ENCODE measurements at regions of chr16 and their contacts with region 1.

Region 1: DNA sequence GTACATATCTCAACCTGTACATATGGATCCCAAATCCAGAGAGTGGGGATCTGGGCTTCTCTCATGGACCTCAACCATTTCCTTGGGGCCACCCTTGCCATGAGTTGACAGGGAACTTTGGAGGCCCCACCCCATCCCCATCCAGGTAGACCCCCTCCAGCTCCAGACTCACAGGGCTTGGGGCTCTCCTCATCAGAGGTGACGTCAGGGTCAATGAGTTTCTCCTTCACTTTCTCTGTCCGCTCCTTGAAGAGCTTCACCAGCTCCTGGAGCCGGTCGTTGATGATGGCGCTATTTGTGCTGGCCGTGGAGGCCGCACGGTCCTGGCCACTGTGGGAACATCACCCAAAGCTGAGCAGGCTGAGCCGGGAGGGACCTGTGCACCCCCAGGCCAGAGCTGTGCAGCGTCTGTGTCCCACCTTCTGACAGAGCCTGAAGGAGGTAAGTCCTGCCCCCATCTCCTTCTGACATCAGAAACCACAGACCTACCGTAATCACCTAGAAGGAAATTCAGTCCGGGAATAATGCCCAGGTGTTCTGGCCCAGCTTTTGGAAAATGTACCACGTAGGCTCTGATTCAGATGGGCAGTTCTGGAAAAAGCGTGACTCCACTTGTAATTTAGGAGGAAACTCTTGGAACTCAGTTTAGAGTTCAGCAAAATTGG is 50.6 kb downstream of the CNGB1 start:
- DNase-seq: no peak
- H3K4me3 ChIP-seq: no peak overlapping the region
- H3K27ac ChIP-seq: no peak overlapping the region
- H3K4me1 ChIP-seq: no peaks in the 10 kb centered on the region
- H3K27me3 ChIP-seq: no peaks in the 10 kb centered on the region
- CTCF ChIP-seq: no peak

Region 2: GRCh38 chr16:58077853-58078252 is 157.5 kb after region 1 on chr16:
- CTCF ChIA-PET with region 1: no interaction called
- POLR2A ChIA-PET with region 1: no interaction called
- intact Hi-C with region 1: no loop called
- DNase-seq: no peak
- H3K4me3 ChIP-seq: no peak overlapping the region
- H3K27ac ChIP-seq: no peak overlapping the region
- H3K4me1 ChIP-seq: no peaks in the 10 kb centered on the region
- H3K27me3 ChIP-seq: no peaks in the 10 kb centered on the region
- CTCF ChIP-seq: no peak

Region 3: GRCh38 chr16:58716468-58716867 is 796.1 kb after region 1 on chr16:
- CTCF ChIA-PET with region 1: no interaction called
- POLR2A ChIA-PET with region 1: no interaction called
- intact Hi-C with region 1: no loop called
- DNase-seq: no peak
- H3K4me3 ChIP-seq: no peak overlapping the region
- H3K27ac ChIP-seq: no peak overlapping the region
- H3K4me1 ChIP-seq: no peaks in the 10 kb centered on the region
- H3K27me3 ChIP-seq: no peaks in the 10 kb centered on the region
- CTCF ChIP-seq: no peak

Region 4: GRCh38 chr16:58733671-58734458 is 813.5 kb after region 1 on chr16 and contains the start of gene GOT2:
- CTCF ChIA-PET with region 1: no interaction called
- POLR2A ChIA-PET with region 1: interaction called, 14 read pairs
- intact Hi-C with region 1: no loop called
- DNase-seq: peak; percentile 91
- H3K4me3 ChIP-seq: peak within 1 kb of the TSS; percentile 76
- H3K27ac ChIP-seq: peak within 1 kb of the TSS; percentile 70
- H3K4me1 ChIP-seq: peaks cover 5% of the 10 kb centered on the region
- H3K27me3 ChIP-seq: no peaks in the 10 kb centered on the region
- CTCF ChIP-seq: peak; percentile 98
- total RNA-seq, gene GOT2: 115 and 123 TPM in 2 replicates